Left ventricle myocardium inferior (tissue), 1 donor: ENCODE measurements at regions of chr1 and their contacts with region 1.

Region 1: GRCh38 chr1:84753516-84754385 is 63.5 kb upstream of the SSX2IP start:
- DNase-seq: peak; percentile 58
- H3K4me3 ChIP-seq: no peak overlapping the region
- H3K27ac ChIP-seq: no peak overlapping the region
- H3K4me1 ChIP-seq: peaks cover 10% of the 10 kb centered on the region
- H3K27me3 ChIP-seq: peaks cover 48% of the 10 kb centered on the region
- CTCF ChIP-seq: peak; percentile 90

Region 2: GRCh38 chr1:84632673-84633434 is 120.9 kb before region 1 on chr1:
- intact Hi-C with region 1: loop called (anchors 10 kb)
- DNase-seq: no peak
- H3K4me3 ChIP-seq: no peak overlapping the region
- H3K27ac ChIP-seq: no peak overlapping the region
- H3K4me1 ChIP-seq: no peaks in the 10 kb centered on the region
- H3K27me3 ChIP-seq: no peaks in the 10 kb centered on the region
- CTCF ChIP-seq: no peak

Region 3: GRCh38 chr1:85091671-85092280 is 338.0 kb after region 1 on chr1:
- intact Hi-C with region 1: no loop called
- DNase-seq: no peak
- H3K4me3 ChIP-seq: no peak overlapping the region
- H3K27ac ChIP-seq: no peak overlapping the region
- H3K4me1 ChIP-seq: peaks cover 14% of the 10 kb centered on the region
- H3K27me3 ChIP-seq: no peaks in the 10 kb centered on the region
- CTCF ChIP-seq: no peak